Brain microvascular endothelial cell (primary cell): ENCODE measurements at regions of chr14 and their contacts with region 1.

Region 1: DNA sequence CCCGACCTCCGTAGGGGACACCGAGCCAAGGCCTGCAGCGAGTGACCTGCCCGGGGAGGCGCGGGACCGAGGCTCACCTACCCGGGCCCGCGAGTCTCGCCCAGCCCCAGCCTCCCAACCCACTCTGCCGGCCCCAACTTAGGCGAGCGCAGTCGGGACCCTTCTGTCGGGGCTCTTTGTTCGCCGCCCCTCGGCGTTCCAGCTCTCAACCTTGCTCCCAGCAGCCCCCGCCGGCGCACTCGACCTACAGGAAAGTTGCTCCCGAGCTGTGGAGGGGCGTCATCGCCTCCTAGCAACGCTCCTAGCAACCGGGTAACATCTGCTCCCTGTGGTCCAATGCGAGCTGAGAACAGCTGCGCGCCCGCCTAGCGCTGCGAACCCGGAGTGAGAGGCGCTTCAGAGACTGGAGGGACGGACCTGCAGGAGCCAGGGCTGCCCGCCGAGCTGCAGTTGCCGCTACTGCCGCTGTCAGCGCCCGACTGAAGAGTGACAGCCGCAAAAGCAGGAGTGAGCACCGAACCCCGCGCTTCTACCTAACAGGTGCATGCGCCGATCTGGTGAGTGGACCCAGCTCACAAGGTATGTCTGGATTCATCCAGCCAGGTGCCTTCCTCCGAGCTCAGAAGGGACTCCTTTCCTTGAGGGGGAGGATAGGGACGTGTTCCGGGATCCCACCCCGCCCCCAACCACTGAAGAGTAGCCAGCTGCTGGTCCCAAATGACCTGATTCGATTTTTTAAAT is 355.0 kb downstream of the SNAPC1 start:
- DNase-seq: peak; percentile 87
- H3K4me3 ChIP-seq: peak overlapping the region; percentile 54
- H3K27ac ChIP-seq: no peak overlapping the region
- H3K27me3 ChIP-seq: peaks cover 6% of the 10 kb centered on the region
- CTCF ChIP-seq: peak; percentile 70

Region 2: DNA sequence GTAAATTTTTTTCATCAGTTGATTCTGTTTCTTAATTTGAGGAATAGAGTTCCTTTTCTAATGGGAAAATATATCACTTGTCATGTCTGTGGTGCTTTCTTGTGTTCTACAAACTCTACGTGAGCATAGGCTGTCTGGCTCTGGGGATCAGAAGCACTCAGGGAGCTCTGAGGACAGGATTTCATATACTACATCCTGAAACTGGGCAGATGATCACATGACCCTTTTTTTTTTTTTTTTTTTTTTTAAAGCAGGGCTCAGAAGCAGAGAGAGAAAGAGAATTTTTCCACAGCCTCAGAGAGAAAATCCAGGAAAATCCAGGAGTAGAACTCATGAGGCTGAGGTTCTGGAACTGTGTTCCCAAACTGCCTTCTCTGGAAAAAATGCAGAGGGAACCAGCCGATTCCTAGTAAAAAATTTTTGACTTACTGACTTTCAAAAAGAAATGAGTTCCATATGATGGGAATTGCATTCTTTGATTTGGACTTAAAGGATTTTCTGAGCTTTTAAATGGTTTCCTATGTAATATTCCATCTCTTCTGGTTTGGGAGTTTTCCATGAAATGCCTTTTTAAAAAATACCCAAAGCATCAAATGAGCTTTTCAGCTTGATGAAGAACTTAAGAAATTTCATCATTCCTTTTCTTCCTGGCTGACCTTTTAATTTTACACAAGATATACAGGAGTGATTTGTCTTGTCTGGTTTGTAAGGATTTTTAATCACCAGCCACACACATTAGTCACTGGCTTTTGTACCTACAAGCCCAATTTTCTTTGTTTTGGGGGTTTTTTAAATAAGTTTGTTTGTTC is 605.0 kb before region 1 on chr14:
- in situ Hi-C with region 1: no loop called
- DNase-seq: no peak
- H3K4me3 ChIP-seq: no peak overlapping the region
- H3K27ac ChIP-seq: no peak overlapping the region
- H3K27me3 ChIP-seq: no peaks in the 10 kb centered on the region
- CTCF ChIP-seq: no peak

Region 3: DNA sequence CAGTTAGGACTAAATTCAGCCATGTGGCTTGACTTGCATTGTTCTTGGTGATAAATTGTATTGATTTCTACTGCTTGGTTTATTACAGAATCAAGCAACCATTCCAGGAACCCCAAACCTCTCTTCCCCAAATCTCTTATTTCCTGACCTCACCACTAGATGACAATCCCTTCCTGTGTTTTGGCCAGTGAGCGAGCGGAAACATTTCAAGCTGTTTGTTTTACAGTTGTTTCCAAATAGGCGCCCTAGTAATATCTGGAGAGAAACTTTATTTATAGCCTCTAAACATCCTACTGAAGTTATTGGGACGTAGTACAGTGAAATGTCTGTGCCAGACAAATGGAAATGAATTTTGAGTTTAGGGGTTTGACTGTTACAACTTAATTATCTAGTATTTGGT is 193.8 kb before region 1 on chr14:
- in situ Hi-C with region 1: loop called (anchors 25 kb)
- DNase-seq: peak; percentile 29
- H3K4me3 ChIP-seq: no peak overlapping the region
- H3K27ac ChIP-seq: no peak overlapping the region
- H3K27me3 ChIP-seq: no peaks in the 10 kb centered on the region
- CTCF ChIP-seq: peak; percentile 68

Region 4: DNA sequence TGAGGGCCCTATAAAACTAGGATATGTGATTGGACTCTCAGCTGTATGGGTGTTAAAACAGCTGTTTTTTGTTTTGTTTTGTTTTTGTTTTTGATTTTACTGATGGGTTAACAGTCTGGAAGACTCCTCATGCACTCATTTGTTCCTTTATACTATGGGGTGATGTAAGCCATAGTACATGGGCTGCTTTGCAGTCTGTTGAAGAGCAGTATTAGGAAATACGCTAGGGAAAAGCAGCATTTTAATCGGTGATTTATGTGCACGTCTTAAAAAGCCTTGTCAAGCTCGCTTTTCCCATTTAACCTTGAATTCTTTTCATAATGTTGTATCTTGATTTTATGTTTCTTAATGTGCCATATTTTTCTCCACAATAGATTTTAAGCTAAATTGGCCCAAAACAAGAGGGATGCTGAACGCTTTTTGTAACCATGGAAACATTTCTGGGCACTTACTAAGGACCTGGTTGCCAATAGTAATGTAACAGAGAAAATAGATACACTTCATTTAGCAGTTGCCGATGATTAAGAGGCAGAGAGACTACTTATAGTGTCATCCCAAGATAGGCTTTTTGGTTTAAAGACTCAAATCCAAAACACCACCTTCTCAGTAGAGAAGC is 111.0 kb before region 1 on chr14:
- in situ Hi-C with region 1: no loop called
- DNase-seq: no peak
- H3K4me3 ChIP-seq: no peak overlapping the region
- H3K27ac ChIP-seq: no peak overlapping the region
- H3K27me3 ChIP-seq: no peaks in the 10 kb centered on the region
- CTCF ChIP-seq: no peak